ENCODE measurements at regions of chr2 and their contacts with region 1.

Region 1: GRCh38 chr2:203238704-203239526 is at the start of gene CYP20A1:
- DNase-seq: peak; percentile 94 to 99 (median 98)
- ATAC-seq: peak; percentile 91
- H3K4me3 ChIP-seq: peak within 1 kb of the TSS; percentile 97
- H3K4me3 Mint-ChIP-seq: peak within 1 kb of the TSS; percentile 90 to 100 (median 95)
- H3K27ac ChIP-seq: peak within 1 kb of the TSS; percentile 98
- H3K27ac Mint-ChIP-seq: peak within 1 kb of the TSS; percentile 96 to 100 (median 98)
- H3K4me1 ChIP-seq: peaks cover 6 to 14% of the 10 kb centered on the region in 2 donors
- H3K4me1 Mint-ChIP-seq: peaks cover 25 to 45% (median 33%) of the 10 kb centered on the region in 7 donors
- H3K27me3 ChIP-seq: no peaks in the 10 kb centered on the region
- H3K27me3 Mint-ChIP-seq: no peaks in the 10 kb centered on the region
- total RNA-seq, gene CYP20A1: 23.7 to 43.3 (median 28.3) TPM

Region 2: DNA sequence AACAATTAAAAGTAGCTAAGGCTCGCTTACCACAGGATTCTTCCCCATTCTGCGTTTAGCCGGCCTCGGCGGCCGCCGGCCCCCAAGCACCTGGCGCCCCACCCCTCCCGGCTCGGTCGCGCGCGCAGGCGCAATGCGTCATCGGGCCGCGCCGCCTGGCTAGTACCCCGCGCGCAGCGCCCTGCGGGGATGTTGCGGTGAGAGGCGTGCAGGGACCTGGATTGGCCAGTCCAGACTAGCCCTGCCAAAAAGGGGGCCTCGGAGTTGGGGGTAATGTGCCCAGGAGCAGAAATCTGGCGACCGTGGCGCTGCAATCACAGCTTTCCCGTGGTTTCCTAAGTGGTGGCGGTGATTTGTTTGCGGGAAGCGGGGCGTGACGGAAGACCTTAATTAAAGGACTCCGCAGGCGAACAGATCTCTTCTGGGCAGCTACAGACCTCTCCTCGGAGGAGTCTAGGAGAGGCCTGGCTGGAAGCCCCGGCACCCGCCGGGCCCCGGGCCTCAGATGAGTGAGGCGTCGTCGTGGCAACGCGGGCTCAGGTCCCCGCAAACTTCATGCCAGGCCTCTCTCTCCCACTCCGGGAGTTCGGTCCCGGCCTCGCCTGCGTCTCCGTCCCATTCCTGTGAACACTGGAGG is 1596.2 kb before region 1 on chr2:
- CTCF ChIA-PET with region 1: no interaction called
- POLR2A ChIA-PET with region 1: no interaction called
- intact Hi-C with region 1: loop called in 1 of 2 experiments (anchors 10 kb)
- DNase-seq: peak; percentile 81 to 94 (median 92)
- ATAC-seq: peak; percentile 94
- H3K4me3 ChIP-seq: peak overlapping the region; percentile 95
- H3K4me3 Mint-ChIP-seq: peak overlapping the region; percentile 86 to 99 (median 96)
- H3K27ac ChIP-seq: peak overlapping the region; percentile 87
- H3K27ac Mint-ChIP-seq: peak overlapping the region; percentile 76 to 100 (median 97)
- H3K4me1 ChIP-seq: peaks cover 3 to 5% of the 10 kb centered on the region in 2 donors
- H3K4me1 Mint-ChIP-seq: peaks cover 5 to 21% (median 12%) of the 10 kb centered on the region in 7 donors
- H3K27me3 ChIP-seq: no peaks in the 10 kb centered on the region
- H3K27me3 Mint-ChIP-seq: peaks cover 0 to 4% (median 0%) of the 10 kb centered on the region in 5 donors

Region 3: GRCh38 chr2:202265467-202266277 is 973.2 kb before region 1 on chr2 and contains the start of gene NOP58:
- CTCF ChIA-PET with region 1: no interaction called
- POLR2A ChIA-PET with region 1: interaction called, 6 read pairs
- intact Hi-C with region 1: loop called (anchors 1 kb)
- DNase-seq: peak; percentile 69 to 96 (median 93)
- ATAC-seq: peak; percentile 90
- H3K4me3 ChIP-seq: peak within 1 kb of the TSS; percentile 93
- H3K4me3 Mint-ChIP-seq: peak within 1 kb of the TSS in 9 of 10 donors; percentile 53 to 71 (median 64)
- H3K27ac ChIP-seq: peak within 1 kb of the TSS; percentile 92
- H3K27ac Mint-ChIP-seq: peak within 1 kb of the TSS in 6 of 9 donors; percentile 4 to 83 (median 76)
- H3K4me1 ChIP-seq: peaks cover 17 to 34% of the 10 kb centered on the region in 2 donors
- H3K4me1 Mint-ChIP-seq: peaks cover 11 to 27% (median 21%) of the 10 kb centered on the region in 7 donors
- H3K27me3 ChIP-seq: no peaks in the 10 kb centered on the region
- H3K27me3 Mint-ChIP-seq: no peaks in the 10 kb centered on the region
- total RNA-seq, gene NOP58: 105 to 259 (median 110) TPM

Region 4: GRCh38 chr2:202911512-202912341 is 327.2 kb before region 1 on chr2 and contains the starts of genes CARF and WDR12:
- CTCF ChIA-PET with region 1: no interaction called
- POLR2A ChIA-PET with region 1: interaction called, 16 read pairs
- intact Hi-C with region 1: loop called (anchors 1 kb)
- DNase-seq: peak; percentile 81 to 93 (median 89)
- ATAC-seq: peak; percentile 93
- H3K4me3 ChIP-seq: peak within 1 kb of the TSS; percentile 82
- H3K4me3 Mint-ChIP-seq: peak within 1 kb of the TSS; percentile 90 to 100 (median 98)
- H3K27ac ChIP-seq: peak within 1 kb of the TSS; percentile 79
- H3K27ac Mint-ChIP-seq: peak within 1 kb of the TSS; percentile 93 to 99 (median 97)
- H3K4me1 ChIP-seq: peaks cover 4 to 11% of the 10 kb centered on the region in 2 donors
- H3K4me1 Mint-ChIP-seq: peaks cover 24 to 50% (median 34%) of the 10 kb centered on the region in 7 donors
- H3K27me3 ChIP-seq: no peaks in the 10 kb centered on the region
- H3K27me3 Mint-ChIP-seq: no peaks in the 10 kb centered on the region
- total RNA-seq, gene CARF: 10.2 to 31.2 (median 15.4) TPM
- total RNA-seq, gene WDR12: 17.2 to 50.4 (median 20.8) TPM

Region 5: GRCh38 chr2:203122301-203122986 is 116.5 kb before region 1 on chr2:
- CTCF ChIA-PET with region 1: no interaction called
- POLR2A ChIA-PET with region 1: no interaction called
- intact Hi-C with region 1: no loop called
- DNase-seq: peak in 1 of 9 donors; percentile 2
- ATAC-seq: no peak
- H3K4me3 ChIP-seq: no peak overlapping the region
- H3K4me3 Mint-ChIP-seq: no peak overlapping the region
- H3K27ac ChIP-seq: no peak overlapping the region
- H3K27ac Mint-ChIP-seq: no peak overlapping the region
- H3K4me1 ChIP-seq: no peaks in the 10 kb centered on the region
- H3K4me1 Mint-ChIP-seq: no peaks in the 10 kb centered on the region
- H3K27me3 ChIP-seq: no peaks in the 10 kb centered on the region
- H3K27me3 Mint-ChIP-seq: no peaks in the 10 kb centered on the region

Region 6: DNA sequence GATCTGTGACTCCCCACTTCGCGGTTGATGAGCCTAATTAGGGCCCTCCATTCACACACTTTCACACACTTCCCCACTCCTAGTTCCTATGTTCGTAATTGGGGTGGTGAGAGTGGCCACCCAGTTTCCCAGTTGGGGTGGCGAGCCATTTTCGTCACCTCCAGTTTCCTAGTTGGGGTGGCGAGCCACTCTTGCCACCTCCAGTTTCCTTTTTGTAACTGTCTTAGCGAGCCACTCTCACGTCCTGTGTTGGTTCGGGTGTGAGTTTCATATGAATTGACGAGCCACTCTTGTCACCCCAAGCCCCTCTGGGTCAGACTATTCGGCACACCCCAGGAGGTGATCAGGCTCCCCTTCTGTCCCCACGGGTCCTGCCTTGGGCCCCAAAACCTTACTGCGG is 13.9 kb after region 1 on chr2:
- CTCF ChIA-PET with region 1: interaction called, 3 read pairs
- POLR2A ChIA-PET with region 1: interaction called, 4 read pairs
- intact Hi-C with region 1: loop called in 1 of 2 experiments (anchors 2 kb)
- DNase-seq: no peak
- ATAC-seq: peak; percentile 4
- H3K4me3 ChIP-seq: no peak overlapping the region
- H3K4me3 Mint-ChIP-seq: no peak overlapping the region
- H3K27ac ChIP-seq: no peak overlapping the region
- H3K27ac Mint-ChIP-seq: no peak overlapping the region
- H3K4me1 ChIP-seq: no peaks in the 10 kb centered on the region
- H3K4me1 Mint-ChIP-seq: peaks cover 0 to 13% (median 4%) of the 10 kb centered on the region in 7 donors
- H3K27me3 ChIP-seq: no peaks in the 10 kb centered on the region
- H3K27me3 Mint-ChIP-seq: no peaks in the 10 kb centered on the region

Region 7: DNA sequence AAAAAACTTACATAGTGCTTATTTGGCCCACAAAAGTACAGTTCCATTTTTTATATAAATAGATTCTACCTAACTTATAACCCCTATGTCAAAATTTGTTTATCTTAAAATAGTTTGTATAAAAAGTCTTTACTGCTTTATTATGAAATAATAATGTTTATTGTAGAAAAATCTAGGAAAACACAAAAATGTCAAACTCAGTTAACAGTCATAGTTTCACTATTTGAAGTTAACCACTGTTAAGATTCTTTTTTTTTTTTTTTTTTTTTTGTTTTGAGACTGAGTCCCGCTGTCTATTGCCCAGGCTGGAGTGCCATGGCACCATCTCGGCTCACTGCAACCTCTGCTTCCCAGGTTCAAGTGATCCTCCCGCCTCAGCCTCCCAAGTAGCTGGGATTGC is 62.8 kb after region 1 on chr2:
- CTCF ChIA-PET with region 1: no interaction called
- POLR2A ChIA-PET with region 1: no interaction called
- intact Hi-C with region 1: no loop called
- DNase-seq: no peak
- ATAC-seq: no peak
- H3K4me3 ChIP-seq: no peak overlapping the region
- H3K4me3 Mint-ChIP-seq: no peak overlapping the region
- H3K27ac ChIP-seq: no peak overlapping the region
- H3K27ac Mint-ChIP-seq: no peak overlapping the region
- H3K4me1 ChIP-seq: no peaks in the 10 kb centered on the region
- H3K4me1 Mint-ChIP-seq: no peaks in the 10 kb centered on the region
- H3K27me3 ChIP-seq: no peaks in the 10 kb centered on the region
- H3K27me3 Mint-ChIP-seq: no peaks in the 10 kb centered on the region

Region 8: GRCh38 chr2:203706403-203706802 is 467.5 kb after region 1 on chr2 and contains the start of gene CD28:
- CTCF ChIA-PET with region 1: no interaction called
- POLR2A ChIA-PET with region 1: no interaction called
- intact Hi-C with region 1: loop called in 1 of 2 experiments (anchors 1 kb)
- DNase-seq: peak; percentile 59 to 96 (median 94)
- ATAC-seq: peak; percentile 90
- H3K4me3 ChIP-seq: peak within 1 kb of the TSS; percentile 70
- H3K4me3 Mint-ChIP-seq: peak within 1 kb of the TSS; percentile 82 to 97 (median 94)
- H3K27ac ChIP-seq: peak within 1 kb of the TSS; percentile 95
- H3K27ac Mint-ChIP-seq: peak within 1 kb of the TSS; percentile 92 to 99 (median 97)
- H3K4me1 ChIP-seq: peaks cover 30 to 39% of the 10 kb centered on the region in 2 donors
- H3K4me1 Mint-ChIP-seq: peaks cover 13 to 50% (median 41%) of the 10 kb centered on the region in 7 donors
- H3K27me3 ChIP-seq: no peaks in the 10 kb centered on the region
- H3K27me3 Mint-ChIP-seq: no peaks in the 10 kb centered on the region
- total RNA-seq, gene CD28: 66.7 to 224 (median 121) TPM

Measured in naive thymus-derived CD4-positive, alpha-beta T cell (primary cell).